Breast epithelium (tissue), 4 donors: ENCODE measurements at regions of chr6 and their contacts with region 1.

Region 1: DNA sequence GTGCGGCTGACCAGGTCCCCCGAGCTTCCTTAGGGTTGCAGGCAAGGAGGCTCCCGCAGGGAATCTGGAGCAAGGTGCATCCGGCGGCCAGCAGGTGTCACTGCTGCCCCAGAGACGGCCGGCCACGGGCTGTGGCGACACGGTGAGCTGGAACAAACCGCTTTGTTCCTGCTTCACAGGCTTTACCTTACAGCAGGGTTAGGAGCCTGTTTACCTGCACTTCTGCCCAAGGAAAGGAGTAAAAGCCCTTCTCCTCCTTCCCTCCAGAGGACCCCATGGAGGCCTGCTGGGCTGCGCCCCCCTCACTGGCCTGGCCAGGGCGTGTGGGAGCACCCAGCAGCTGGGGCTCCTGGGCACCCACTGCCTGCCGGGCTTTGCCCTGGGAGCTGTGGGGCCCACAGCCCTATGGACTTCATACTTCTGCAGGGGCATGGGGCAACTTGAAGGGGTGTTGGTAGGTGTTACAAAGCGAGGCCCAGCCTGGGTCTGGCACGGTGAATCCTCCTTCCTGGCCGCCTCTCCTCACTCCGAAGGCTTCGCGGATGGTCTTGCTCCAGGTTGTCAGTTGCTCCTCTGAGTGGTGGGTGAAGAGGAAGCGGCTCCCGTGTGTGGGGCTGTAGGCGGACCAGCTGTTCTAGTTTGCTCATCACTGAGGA is 88.4 kb downstream of the CDC5L start:
- DNase-seq: peak; percentile 74 to 80
- H3K4me3 ChIP-seq: peak overlapping the region in 1 of 3 donors; percentile 13
- H3K27ac ChIP-seq: peak overlapping the region; percentile 46 to 81
- H3K4me1 ChIP-seq: no peaks in the 10 kb centered on the region
- H3K27me3 ChIP-seq: no peaks in the 10 kb centered on the region
- CTCF ChIP-seq: peak; percentile 78 to 94 (median 88)
- POLR2A ChIP-seq: no peak

Region 2: GRCh38 chr6:44058617-44059358 is 417.1 kb before region 1 on chr6:
- intact Hi-C with region 1: no loop called
- DNase-seq: peak; percentile 86 to 95
- H3K4me3 ChIP-seq: peak overlapping the region in 1 of 3 donors; percentile 51
- H3K27ac ChIP-seq: peak overlapping the region; percentile 96
- H3K4me1 ChIP-seq: peaks cover 13 to 36% of the 10 kb centered on the region in 2 donors
- H3K27me3 ChIP-seq: no peaks in the 10 kb centered on the region
- CTCF ChIP-seq: no peak
- POLR2A ChIP-seq: no peak

Region 3: GRCh38 chr6:45922728-45923351 is 1446.9 kb after region 1 on chr6:
- intact Hi-C with region 1: loop called (anchors 5 kb)
- DNase-seq: peak in 1 of 2 donors; percentile 55
- H3K4me3 ChIP-seq: no peak overlapping the region
- H3K27ac ChIP-seq: peak overlapping the region in 1 of 2 donors; percentile 6
- H3K4me1 ChIP-seq: no peaks in the 10 kb centered on the region
- H3K27me3 ChIP-seq: no peaks in the 10 kb centered on the region
- CTCF ChIP-seq: peak; percentile 22 to 66 (median 60)
- POLR2A ChIP-seq: no peak